GM12878 (cell line): ENCODE measurements at regions of chr9 and their contacts with region 1.

Region 1: GRCh38 chr9:95167998-95168397 is 149.5 kb downstream of the FANCC start:
- DNase-seq: no peak
- ATAC-seq: peak; percentile 72
- H3K4me3 ChIP-seq: no peak overlapping the region
- H3K27ac ChIP-seq: no peak overlapping the region
- H3K4me1 ChIP-seq: peaks cover 5% of the 10 kb centered on the region; the same call in 1 of the 2 replicates
- H3K27me3 ChIP-seq: no peaks in the 10 kb centered on the region
- CTCF ChIP-seq: peak; percentile 56 to 87 (median 81)
- EP300 ChIP-seq: no peak
- POLR2A ChIP-seq: no peak
- RAD21 ChIP-seq: peak; percentile 59

Region 2: GRCh38 chr9:94668418-94668932 is 499.5 kb before region 1 on chr9:
- CTCF ChIA-PET with region 1: interaction called, 11 read pairs
- POLR2A ChIA-PET with region 1: no interaction called
- RAD21 ChIA-PET with region 1: interaction called, 10 read pairs
- SMC1A ChIA-PET with region 1: interaction called, 7 read pairs
- in situ Hi-C with region 1: no loop called
- intact Hi-C with region 1: no loop called
- DNase-seq: no peak
- ATAC-seq: peak; percentile 8; the same call in 2 of the 3 replicates
- H3K4me3 ChIP-seq: no peak overlapping the region
- H3K27ac ChIP-seq: no peak overlapping the region
- H3K4me1 ChIP-seq: no peaks in the 10 kb centered on the region
- H3K27me3 ChIP-seq: no peaks in the 10 kb centered on the region; a peak in 1 of 4 replicates
- CTCF ChIP-seq: no peak
- EP300 ChIP-seq: no peak
- POLR2A ChIP-seq: no peak
- RAD21 ChIP-seq: no peak

Region 3: GRCh38 chr9:95143591-95144561 is 24.1 kb before region 1 on chr9:
- CTCF ChIA-PET with region 1: interaction called, 47 read pairs
- POLR2A ChIA-PET with region 1: no interaction called
- RAD21 ChIA-PET with region 1: interaction called, 6 read pairs
- SMC1A ChIA-PET with region 1: interaction called, 5 read pairs
- in situ Hi-C with region 1: no loop called
- intact Hi-C with region 1: no loop called
- DNase-seq: no peak
- ATAC-seq: no peak
- H3K4me3 ChIP-seq: no peak overlapping the region
- H3K27ac ChIP-seq: no peak overlapping the region
- H3K4me1 ChIP-seq: no peaks in the 10 kb centered on the region
- H3K27me3 ChIP-seq: no peaks in the 10 kb centered on the region
- CTCF ChIP-seq: no peak
- EP300 ChIP-seq: no peak
- POLR2A ChIP-seq: no peak
- RAD21 ChIP-seq: no peak

Region 4: GRCh38 chr9:95157481-95158151 is 10.4 kb before region 1 on chr9:
- CTCF ChIA-PET with region 1: interaction called, 47 read pairs
- POLR2A ChIA-PET with region 1: no interaction called
- RAD21 ChIA-PET with region 1: interaction called, 9 read pairs
- SMC1A ChIA-PET with region 1: interaction called, 10 read pairs
- in situ Hi-C with region 1: no loop called
- intact Hi-C with region 1: no loop called
- DNase-seq: peak; percentile 40
- ATAC-seq: peak; percentile 99
- H3K4me3 ChIP-seq: no peak overlapping the region; the same call in 1 of the 2 replicates
- H3K27ac ChIP-seq: no peak overlapping the region
- H3K4me1 ChIP-seq: peaks cover 8% of the 10 kb centered on the region
- H3K27me3 ChIP-seq: no peaks in the 10 kb centered on the region
- CTCF ChIP-seq: no peak
- EP300 ChIP-seq: peak; percentile 28 to 48; a peak in 2 of 4 replicates
- POLR2A ChIP-seq: no peak
- RAD21 ChIP-seq: no peak

Region 5: DNA sequence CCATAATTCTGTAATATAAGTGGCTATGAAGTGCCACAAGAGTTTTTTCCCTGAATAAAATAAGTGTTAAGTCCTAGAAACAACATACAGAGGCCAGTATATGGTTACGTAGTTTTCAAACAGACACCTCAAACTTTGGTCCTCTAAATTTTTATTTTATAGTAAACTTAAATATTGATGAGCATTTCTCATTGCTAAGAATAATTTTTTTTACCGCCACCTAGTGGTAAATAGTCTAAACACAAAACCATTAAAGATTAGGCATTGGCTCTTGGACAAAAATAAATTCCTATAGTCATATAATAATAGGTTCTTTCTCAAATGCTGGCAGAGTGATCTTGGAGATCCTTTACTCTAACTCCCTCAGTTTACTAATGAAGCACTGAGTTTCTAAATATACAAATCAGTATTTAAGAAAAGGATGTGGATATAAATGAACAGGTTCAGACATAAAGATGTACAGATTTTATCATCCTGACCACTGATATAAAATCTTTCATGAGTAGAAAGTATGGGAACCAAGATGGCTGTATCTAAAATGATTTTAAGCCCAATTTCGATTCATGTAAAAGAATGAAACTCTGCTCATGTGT is 13.3 kb after region 1 on chr9:
- CTCF ChIA-PET with region 1: interaction called, 34 read pairs
- POLR2A ChIA-PET with region 1: no interaction called
- RAD21 ChIA-PET with region 1: no interaction called
- SMC1A ChIA-PET with region 1: interaction called, 5 read pairs
- in situ Hi-C with region 1: no loop called
- intact Hi-C with region 1: no loop called
- DNase-seq: no peak
- ATAC-seq: 0 out of 3 replicates have a peak, but pooled peaks have one; percentile 21
- H3K4me3 ChIP-seq: no peak overlapping the region
- H3K27ac ChIP-seq: no peak overlapping the region
- H3K4me1 ChIP-seq: no peaks in the 10 kb centered on the region
- H3K27me3 ChIP-seq: no peaks in the 10 kb centered on the region
- CTCF ChIP-seq: peak; percentile 21 to 47 (median 34); a peak in 4 of 6 replicates
- EP300 ChIP-seq: no peak
- POLR2A ChIP-seq: no peak
- RAD21 ChIP-seq: peak; percentile 22; the same call in 1 of the 2 replicates

Region 6: DNA sequence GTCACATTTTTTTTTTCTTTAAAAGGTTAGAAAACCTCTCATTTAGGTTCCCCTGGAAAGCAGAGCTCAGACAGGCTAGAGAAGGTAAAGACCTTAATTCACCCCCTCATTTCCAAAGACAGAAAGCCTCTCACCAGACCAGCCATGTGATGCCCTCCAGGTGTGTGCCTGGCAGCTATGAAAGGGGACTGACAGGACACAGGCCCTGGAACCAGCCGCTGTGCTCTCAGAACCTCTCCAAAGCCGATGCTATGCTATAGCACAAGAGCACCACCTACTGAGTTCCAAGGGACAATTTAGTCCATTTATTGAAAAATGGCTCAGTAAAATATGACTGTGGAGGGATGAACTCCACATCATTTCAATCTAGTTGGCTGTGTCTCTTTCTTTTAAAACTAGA is 100.7 kb after region 1 on chr9:
- CTCF ChIA-PET with region 1: interaction called, 14 read pairs
- POLR2A ChIA-PET with region 1: no interaction called
- RAD21 ChIA-PET with region 1: interaction called, 3 read pairs
- SMC1A ChIA-PET with region 1: interaction called, 10 read pairs
- in situ Hi-C with region 1: no loop called
- intact Hi-C with region 1: no loop called
- DNase-seq: no peak
- ATAC-seq: peak; percentile 68
- H3K4me3 ChIP-seq: no peak overlapping the region
- H3K27ac ChIP-seq: no peak overlapping the region
- H3K4me1 ChIP-seq: peaks cover 18% of the 10 kb centered on the region
- H3K27me3 ChIP-seq: no peaks in the 10 kb centered on the region
- CTCF ChIP-seq: peak; percentile 31 to 56 (median 36); a peak in 4 of 6 replicates
- EP300 ChIP-seq: no peak
- POLR2A ChIP-seq: no peak
- RAD21 ChIP-seq: peak; percentile 76